IMR-90 (cell line): ENCODE measurements at regions of chr3 and their contacts with region 1.

Region 1: DNA sequence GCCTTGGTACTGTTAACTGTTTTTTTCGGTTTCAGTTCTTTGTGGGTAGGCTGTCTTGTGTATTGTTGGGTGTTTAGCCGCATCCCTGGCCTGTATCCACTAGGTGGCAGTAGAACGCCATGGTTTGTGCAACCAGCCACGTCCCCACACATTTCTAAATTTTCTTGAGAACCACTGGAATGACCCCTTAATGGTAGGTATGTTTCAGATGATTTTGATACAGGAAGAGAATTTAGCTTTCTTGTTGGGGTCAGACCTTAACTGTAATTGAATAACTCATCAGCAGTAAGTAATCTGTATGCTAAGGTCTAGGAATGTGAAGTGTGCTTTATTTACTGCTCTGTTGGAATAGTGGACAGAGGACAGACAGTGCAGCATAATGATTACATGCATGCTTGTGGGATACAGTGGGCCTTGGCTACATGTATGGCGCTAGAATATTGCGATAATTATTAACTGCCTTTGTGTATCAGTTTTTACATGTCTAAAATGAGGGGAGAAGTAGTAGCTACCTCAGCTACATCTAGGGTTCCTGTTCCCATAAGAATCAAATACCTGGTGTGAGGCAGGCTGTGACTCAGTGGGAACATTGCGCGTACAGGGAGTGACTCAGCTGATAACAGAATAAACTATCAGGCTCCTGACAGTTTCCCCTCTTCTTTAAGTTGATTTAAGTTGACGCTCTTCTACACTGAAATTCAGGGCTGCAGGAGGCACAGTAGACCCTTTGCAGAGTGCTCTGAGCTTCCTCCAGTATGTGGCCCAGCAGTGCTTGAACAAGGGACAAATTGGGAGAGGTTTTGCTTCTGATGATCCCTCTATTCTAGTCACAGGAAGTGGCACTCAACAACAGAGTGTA is 25.0 kb upstream of the GPR171 start:
- DNase-seq: peak; percentile 95
- ATAC-seq: peak; percentile 79
- H3K4me3 ChIP-seq: no peak overlapping the region
- H3K27ac ChIP-seq: peak overlapping the region; percentile 66
- H3K4me1 ChIP-seq: peaks cover 21% of the 10 kb centered on the region
- H3K27me3 ChIP-seq: no peaks in the 10 kb centered on the region
- CTCF ChIP-seq: peak; percentile 96
- POLR2A ChIP-seq: peak; percentile 67
- RAD21 ChIP-seq: peak; percentile 98

Region 2: GRCh38 chr3:151168269-151169094 is 59.6 kb before region 1 on chr3:
- CTCF ChIA-PET with region 1: interaction called, 10 read pairs
- POLR2A ChIA-PET with region 1: no interaction called
- dilution Hi-C with region 1: no loop called
- in situ Hi-C with region 1: loop called (anchors 5 kb)
- intact Hi-C with region 1: loop called (anchors 1 kb)
- DNase-seq: peak; percentile 67
- ATAC-seq: peak; percentile 90
- H3K4me3 ChIP-seq: no peak overlapping the region
- H3K27ac ChIP-seq: no peak overlapping the region
- H3K4me1 ChIP-seq: no peaks in the 10 kb centered on the region
- H3K27me3 ChIP-seq: no peaks in the 10 kb centered on the region
- CTCF ChIP-seq: peak; percentile 84
- POLR2A ChIP-seq: no peak
- RAD21 ChIP-seq: peak; percentile 93

Region 3: GRCh38 chr3:151276687-151277042 is 48.6 kb after region 1 on chr3:
- CTCF ChIA-PET with region 1: interaction called, 32 read pairs
- POLR2A ChIA-PET with region 1: no interaction called
- dilution Hi-C with region 1: no loop called
- in situ Hi-C with region 1: loop called (anchors 5 kb)
- intact Hi-C with region 1: no loop called
- DNase-seq: no peak
- ATAC-seq: no peak
- H3K4me3 ChIP-seq: no peak overlapping the region
- H3K27ac ChIP-seq: no peak overlapping the region
- H3K4me1 ChIP-seq: peaks cover 2% of the 10 kb centered on the region; the same call in 1 of the 2 replicates
- H3K27me3 ChIP-seq: no peaks in the 10 kb centered on the region
- CTCF ChIP-seq: no peak
- POLR2A ChIP-seq: no peak
- RAD21 ChIP-seq: no peak